Posterior vena cava (tissue), 2 donors: ENCODE measurements at regions of chr7 and their contacts with region 1.

Region 1: GRCh38 chr7:127651556-127652332 is at the start of gene SND1:
- DNase-seq: peak; percentile 99
- total RNA-seq, gene SND1: 131 to 135 TPM

Region 2: DNA sequence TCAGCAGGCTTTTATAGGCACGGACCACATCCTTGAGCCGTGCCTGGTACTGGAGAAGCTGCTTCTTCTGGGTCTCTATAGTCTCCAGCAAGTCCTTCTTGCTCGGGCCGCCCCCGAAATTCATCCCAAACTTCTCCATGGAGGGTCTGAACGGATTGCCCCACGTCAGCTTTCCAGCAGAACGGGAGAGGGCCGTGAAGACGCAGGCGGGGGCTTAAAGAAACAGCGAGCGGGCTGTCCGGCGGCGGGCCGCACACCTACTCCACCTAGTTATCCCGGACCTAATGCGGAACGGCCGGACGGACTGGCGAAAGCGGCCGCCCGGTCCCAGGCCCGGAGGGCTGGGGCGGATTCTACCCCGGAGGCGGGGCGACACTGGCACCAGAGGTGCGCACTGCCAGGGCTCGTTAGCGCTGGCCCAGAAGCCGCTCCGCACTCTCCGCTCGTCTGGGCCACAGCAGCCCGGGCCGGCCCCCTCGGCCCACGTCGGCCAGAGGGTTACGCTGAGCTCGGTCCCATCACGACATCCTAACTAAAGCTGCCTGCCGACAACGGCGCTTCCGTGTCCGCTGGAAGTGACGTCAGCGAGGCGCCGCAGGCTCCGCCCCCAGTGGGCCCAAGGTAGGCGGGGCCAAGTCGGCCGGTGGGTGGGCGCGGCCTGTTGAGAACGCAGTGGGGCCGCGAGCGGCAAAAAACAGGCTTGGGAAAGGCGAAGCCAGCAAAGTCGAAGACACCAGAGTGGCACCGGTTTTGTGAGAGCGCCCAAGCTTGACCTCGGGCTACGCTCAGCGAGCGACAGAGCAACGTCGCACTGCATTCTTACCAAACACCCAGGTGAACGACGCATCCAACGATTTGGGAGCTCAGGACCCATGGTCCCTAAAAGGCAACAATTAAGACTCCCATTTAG is 66.4 kb before region 1 on chr7 and contains the start of gene GCC1:
- intact Hi-C with region 1: loop called in 1 of 2 experiments (anchors 5 kb)
- DNase-seq: peak; percentile 98
- total RNA-seq, gene GCC1: 9.6 to 11.0 TPM

Region 3: GRCh38 chr7:127717502-127718339 is 66.0 kb after region 1 on chr7:
- intact Hi-C with region 1: no loop called
- DNase-seq: no peak